Mammary epithelial cell (primary cell): ENCODE measurements at regions of chr6 and their contacts with region 1.

Region 1: GRCh38 chr6:138773177-138774091 is at the start of gene CCDC28A:
- DNase-seq: peak; percentile 95
- H3K4me3 ChIP-seq: peak within 1 kb of the TSS; percentile 94 to 96 (median 95)
- H3K27ac ChIP-seq: peak within 1 kb of the TSS; percentile 81
- H3K4me1 ChIP-seq: peaks cover 14% of the 10 kb centered on the region
- H3K27me3 ChIP-seq: no peaks in the 10 kb centered on the region
- CTCF ChIP-seq: no peak
- total RNA-seq, gene CCDC28A: 7.3 to 10.3 TPM

Region 2: DNA sequence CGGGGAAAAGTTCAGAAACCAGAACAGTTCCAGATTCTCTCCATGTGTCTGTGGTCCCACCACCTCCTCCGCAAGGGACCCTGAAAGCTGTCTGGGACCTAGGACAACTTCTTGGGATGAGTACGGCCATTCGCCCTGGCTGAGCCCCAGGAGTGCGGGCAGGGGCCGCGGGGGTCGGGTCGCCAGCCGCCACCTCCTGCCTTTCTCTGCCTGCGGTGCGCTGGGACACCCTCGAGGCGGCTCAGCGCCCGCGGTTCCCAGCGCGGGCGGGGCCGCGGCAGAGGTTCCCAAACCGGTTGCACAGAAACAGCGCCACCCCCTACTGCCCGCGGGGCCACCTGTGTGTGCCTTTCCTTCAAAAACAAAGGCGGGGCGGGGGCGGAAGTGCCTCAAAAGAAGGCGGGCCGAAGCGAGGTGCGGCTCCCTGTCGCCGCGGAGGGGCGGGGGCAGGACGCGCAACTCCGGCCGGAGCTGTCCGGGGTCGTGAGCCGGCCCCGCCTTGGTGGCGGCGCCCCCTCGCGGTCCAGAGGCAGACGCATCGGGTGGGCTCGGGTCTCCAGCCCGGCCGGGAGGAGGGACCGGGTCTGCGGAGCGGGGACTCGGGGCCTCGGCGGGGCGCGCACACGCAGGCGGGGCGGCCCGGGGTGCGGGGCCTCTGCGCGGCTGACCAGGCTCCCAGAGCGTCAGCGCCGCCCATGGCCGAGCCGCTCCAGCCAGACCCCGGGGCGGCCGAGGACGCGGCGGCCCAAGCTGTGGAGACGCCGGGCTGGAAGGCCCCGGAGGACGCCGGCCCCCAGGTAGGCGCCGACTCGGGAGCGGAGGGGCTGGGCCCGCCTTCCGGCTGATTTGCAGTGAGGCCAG is 369.4 kb before region 1 on chr6 and contains the start of gene HEBP2:
- CTCF ChIA-PET with region 1: no interaction called
- dilution Hi-C with region 1: no loop called
- in situ Hi-C with region 1: loop called in 1 of 2 experiments (anchors 25 kb)
- intact Hi-C with region 1: no loop called
- DNase-seq: peak; percentile 95
- H3K4me3 ChIP-seq: peak within 1 kb of the TSS; percentile 84 to 98 (median 88)
- H3K27ac ChIP-seq: peak within 1 kb of the TSS; percentile 98
- H3K4me1 ChIP-seq: peaks cover 21% of the 10 kb centered on the region
- H3K27me3 ChIP-seq: no peaks in the 10 kb centered on the region
- CTCF ChIP-seq: peak in 1 of 2 donors; percentile 40
- total RNA-seq, gene HEBP2: 63.8 to 99.1 TPM

Region 3: DNA sequence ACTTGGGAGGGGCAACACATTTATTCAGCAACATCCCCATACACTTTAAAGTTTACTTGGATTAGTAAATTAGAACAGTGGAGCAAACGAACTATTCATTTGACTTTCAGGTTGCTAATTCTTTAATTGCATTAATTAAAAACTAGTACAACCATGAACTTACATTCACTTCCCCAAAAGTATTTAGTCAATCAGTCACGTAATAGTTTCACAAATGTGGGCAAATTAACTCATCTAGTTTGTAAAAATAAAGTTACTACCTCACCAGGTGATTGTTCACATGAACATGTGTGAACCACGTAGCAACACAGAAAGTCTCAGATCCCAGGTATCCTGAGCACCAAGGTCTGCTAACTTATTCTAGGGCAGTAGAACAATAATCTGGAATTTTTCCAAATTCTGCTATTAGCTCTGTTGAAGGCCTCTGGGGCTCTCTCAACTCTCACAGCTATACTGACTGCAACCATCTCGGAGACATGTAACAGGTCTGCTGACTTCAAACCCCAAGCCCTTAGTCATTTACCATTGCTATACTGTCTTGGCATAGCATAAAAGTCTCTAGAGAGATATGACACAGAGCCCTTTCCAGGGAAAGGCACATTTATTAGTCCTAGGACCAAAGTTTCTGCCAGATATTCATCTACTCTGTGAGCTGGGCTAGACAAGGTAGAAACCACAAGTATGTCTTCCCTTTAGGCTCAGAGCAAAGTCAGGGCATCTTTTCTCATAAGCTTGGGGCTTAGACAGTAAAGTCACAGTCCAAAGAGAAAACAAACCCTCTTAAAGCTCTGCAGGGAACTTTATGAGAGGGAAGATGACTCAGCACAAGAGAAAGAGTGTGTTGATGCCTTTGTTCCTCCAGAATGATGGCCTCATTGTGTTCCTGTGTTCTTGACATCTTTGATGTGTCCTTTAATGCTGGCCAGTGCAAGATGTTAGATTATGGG is 50.7 kb before region 1 on chr6:
- CTCF ChIA-PET with region 1: no interaction called
- dilution Hi-C with region 1: no loop called
- in situ Hi-C with region 1: no loop called
- intact Hi-C with region 1: no loop called
- DNase-seq: peak; percentile 87
- H3K4me3 ChIP-seq: no peak overlapping the region
- H3K27ac ChIP-seq: peak overlapping the region; percentile 0
- H3K4me1 ChIP-seq: peaks cover 10% of the 10 kb centered on the region
- H3K27me3 ChIP-seq: no peaks in the 10 kb centered on the region
- CTCF ChIP-seq: no peak

Region 4: GRCh38 chr6:138891255-138891986 is 118.0 kb after region 1 on chr6:
- CTCF ChIA-PET with region 1: no interaction called
- dilution Hi-C with region 1: no loop called
- in situ Hi-C with region 1: no loop called
- intact Hi-C with region 1: no loop called
- DNase-seq: peak; percentile 11
- H3K4me3 ChIP-seq: no peak overlapping the region
- H3K27ac ChIP-seq: no peak overlapping the region
- H3K4me1 ChIP-seq: peaks cover 7% of the 10 kb centered on the region
- H3K27me3 ChIP-seq: no peaks in the 10 kb centered on the region
- CTCF ChIP-seq: no peak

Region 5: DNA sequence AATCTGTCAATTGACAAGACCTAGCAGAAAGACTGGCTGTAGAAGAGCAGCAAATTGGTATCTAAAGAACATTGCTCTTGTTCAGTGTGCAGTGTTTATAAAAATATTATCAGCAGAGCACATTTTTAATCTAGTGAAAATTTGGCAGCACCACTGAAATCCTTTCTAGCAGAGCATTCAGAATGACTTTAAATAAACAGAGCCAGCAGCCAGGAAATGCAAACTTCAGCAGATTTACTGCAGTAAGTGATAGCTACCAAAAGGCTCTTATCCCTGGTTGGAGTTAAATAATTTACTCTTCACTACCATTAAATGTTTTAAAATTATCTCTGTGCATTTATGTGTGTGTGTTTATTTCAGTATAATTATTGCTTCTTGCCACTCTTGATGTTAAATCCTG is 1192.0 kb after region 1 on chr6:
- CTCF ChIA-PET with region 1: no interaction called
- dilution Hi-C with region 1: no loop called
- in situ Hi-C with region 1: no loop called
- intact Hi-C with region 1: no loop called
- DNase-seq: no peak
- H3K4me3 ChIP-seq: no peak overlapping the region
- H3K27ac ChIP-seq: no peak overlapping the region
- H3K4me1 ChIP-seq: no peaks in the 10 kb centered on the region
- H3K27me3 ChIP-seq: no peaks in the 10 kb centered on the region
- CTCF ChIP-seq: no peak